ENCODE measurements at regions of chr11 and their contacts with region 1.

Region 1: DNA sequence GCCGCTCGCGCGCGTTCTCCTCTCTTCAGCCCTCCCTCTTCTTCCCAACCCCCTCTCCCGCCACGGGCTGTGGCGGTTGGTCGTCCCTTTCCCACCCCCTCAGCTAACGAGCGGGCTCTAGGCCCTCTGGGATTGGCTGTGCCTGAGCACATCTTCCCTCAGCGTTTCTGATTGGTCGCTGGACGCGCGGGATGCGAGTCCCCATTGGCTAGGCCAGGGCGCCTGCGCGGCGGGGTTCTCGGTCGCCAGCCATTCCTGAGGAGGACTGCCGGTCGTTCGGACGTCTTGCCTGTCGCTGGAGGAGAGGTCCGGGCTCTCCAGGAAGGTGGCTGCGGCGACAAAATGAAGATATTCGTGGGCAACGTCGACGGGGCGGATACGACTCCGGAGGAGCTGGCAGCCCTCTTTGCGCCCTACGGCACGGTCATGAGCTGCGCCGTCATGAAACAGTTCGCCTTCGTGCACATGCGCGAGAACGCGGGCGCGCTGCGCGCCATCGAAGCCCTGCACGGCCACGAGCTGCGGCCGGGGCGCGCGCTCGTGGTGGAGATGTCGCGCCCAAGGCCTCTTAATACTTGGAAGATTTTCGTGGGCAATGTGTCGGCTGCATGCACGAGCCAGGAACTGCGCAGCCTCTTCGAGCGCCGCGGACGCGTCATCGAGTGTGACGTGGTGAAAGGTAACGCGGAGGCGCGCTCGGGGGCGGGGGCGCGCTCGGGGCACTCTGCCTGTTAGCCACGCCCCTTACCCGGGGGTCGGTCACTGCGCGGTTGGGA is at the start of gene RBM14:
- DNase-seq: peak; percentile 96 to 100 (median 98)
- ATAC-seq: peak; percentile 82
- H3K4me3 ChIP-seq: peak within 1 kb of the TSS; percentile 88 to 93
- H3K4me3 Mint-ChIP-seq: peak within 1 kb of the TSS; percentile 98
- H3K27ac ChIP-seq: peak within 1 kb of the TSS; percentile 94 to 99
- H3K27ac Mint-ChIP-seq: peak within 1 kb of the TSS; percentile 97
- H3K4me1 ChIP-seq: peaks cover 43% of the 10 kb centered on the region
- H3K4me1 Mint-ChIP-seq: peaks cover 38% of the 10 kb centered on the region
- H3K27me3 ChIP-seq: no peaks in the 10 kb centered on the region
- H3K27me3 Mint-ChIP-seq: no peaks in the 10 kb centered on the region
- CTCF ChIP-seq: no peak
- total RNA-seq, gene RBM14: 198 to 213 TPM

Region 2: GRCh38 chr11:66222358-66223149 is 394.0 kb before region 1 on chr11:
- CTCF ChIA-PET with region 1: no interaction called
- POLR2A ChIA-PET with region 1: no interaction called
- intact Hi-C with region 1: loop called in 1 of 2 experiments (anchors 5 kb)
- DNase-seq: peak; percentile 82 to 98 (median 92)
- ATAC-seq: peak; percentile 99
- H3K4me3 ChIP-seq: no peak overlapping the region
- H3K4me3 Mint-ChIP-seq: no peak overlapping the region
- H3K27ac ChIP-seq: peak overlapping the region; percentile 23 to 82
- H3K27ac Mint-ChIP-seq: peak overlapping the region; percentile 93
- H3K4me1 ChIP-seq: peaks cover 6% of the 10 kb centered on the region
- H3K4me1 Mint-ChIP-seq: peaks cover 16% of the 10 kb centered on the region
- H3K27me3 ChIP-seq: no peaks in the 10 kb centered on the region
- H3K27me3 Mint-ChIP-seq: no peaks in the 10 kb centered on the region
- CTCF ChIP-seq: peak; percentile 98

Region 3: DNA sequence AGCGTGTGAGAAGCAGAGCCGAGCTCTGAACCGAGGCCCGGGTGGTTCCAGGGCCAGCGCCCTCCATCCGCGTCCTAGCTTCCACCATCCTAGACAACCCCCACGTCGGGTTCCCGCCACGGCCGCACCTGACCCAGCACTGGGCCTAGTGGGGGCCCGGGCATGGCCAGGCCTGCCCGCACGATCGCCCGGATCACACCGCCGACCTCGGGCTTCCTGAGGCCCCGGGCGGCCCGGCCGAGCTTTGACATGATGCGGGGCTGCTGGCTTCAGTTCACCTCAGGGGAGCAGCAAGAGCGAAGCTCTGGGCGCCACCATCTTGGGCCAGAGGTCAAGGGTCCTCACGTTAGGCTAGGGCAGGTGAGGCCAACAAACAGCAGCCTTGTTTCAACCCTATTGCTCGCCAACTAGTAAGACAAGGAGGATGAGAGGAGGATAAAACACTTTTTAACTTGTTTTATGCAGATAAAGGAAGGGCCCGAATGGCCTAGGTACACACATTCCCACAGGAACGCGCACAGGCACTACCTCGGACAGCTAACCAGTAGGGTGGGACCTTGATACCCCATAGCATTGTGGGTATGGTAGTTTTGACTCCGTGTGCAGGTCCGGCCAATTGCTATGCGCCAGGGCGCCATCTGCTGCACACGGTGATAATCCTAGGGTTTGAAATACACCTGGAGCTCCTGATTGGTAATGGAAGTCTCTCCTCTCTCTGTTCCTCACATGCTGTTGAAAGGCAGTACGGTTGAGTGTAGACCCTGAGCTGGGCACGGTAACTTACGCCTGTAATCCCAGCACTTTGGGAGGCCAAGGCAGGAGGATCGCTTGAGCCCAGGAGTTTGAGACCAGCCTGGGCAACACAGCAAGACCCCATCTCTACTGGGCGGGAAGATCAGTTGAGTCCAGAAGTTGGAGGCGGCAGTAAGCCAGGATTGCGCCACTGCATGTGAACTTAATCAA is 177.8 kb before region 1 on chr11 and contains the start of gene MRPL11:
- CTCF ChIA-PET with region 1: no interaction called
- POLR2A ChIA-PET with region 1: interaction called, 5 read pairs
- intact Hi-C with region 1: loop called in 1 of 2 experiments (anchors 2 kb)
- DNase-seq: peak; percentile 79 to 96 (median 90)
- ATAC-seq: peak; percentile 99
- H3K4me3 ChIP-seq: peak within 1 kb of the TSS; percentile 72 to 78
- H3K4me3 Mint-ChIP-seq: peak within 1 kb of the TSS; percentile 91
- H3K27ac ChIP-seq: peak within 1 kb of the TSS; percentile 66 to 85
- H3K27ac Mint-ChIP-seq: peak within 1 kb of the TSS; percentile 98
- H3K4me1 ChIP-seq: peaks cover 7% of the 10 kb centered on the region
- H3K4me1 Mint-ChIP-seq: peaks cover 10% of the 10 kb centered on the region
- H3K27me3 ChIP-seq: no peaks in the 10 kb centered on the region
- H3K27me3 Mint-ChIP-seq: peaks cover 2% of the 10 kb centered on the region
- CTCF ChIP-seq: peak; percentile 64
- total RNA-seq, gene MRPL11: 19.8 to 20.6 TPM

Region 4: DNA sequence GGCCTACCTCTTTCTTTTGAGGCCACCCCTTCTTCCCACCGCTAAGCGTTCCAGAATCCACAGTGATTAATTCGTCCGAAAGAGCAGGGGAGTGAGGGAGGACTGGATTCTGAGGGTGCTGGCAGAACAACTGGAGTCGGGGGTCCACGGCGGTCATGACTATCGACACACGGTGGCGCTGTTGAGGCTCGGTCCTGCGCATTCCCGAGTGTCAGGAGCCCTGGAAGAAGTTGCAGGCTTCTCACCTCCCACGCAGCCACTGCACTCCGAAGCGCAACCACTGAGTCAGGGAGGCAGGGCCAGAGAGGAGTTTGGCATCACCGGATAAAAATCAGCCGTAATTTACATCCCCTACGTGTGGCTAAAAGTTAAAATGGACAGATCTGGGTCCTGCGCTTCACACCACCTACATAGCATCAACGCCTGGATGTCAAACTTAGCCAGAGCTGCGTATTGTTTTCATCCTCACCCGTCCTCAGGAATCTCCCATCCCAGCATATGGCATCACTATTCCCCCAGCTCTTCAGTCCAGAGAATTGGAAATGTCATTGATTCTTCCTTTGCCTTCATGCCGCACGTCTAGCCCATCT is 37.5 kb before region 1 on chr11:
- CTCF ChIA-PET with region 1: interaction called, 3 read pairs
- POLR2A ChIA-PET with region 1: interaction called, 5 read pairs
- intact Hi-C with region 1: loop called in 1 of 2 experiments (anchors 5 kb)
- DNase-seq: peak; percentile 43 to 86 (median 80)
- ATAC-seq: peak; percentile 90
- H3K4me3 ChIP-seq: no peak overlapping the region
- H3K4me3 Mint-ChIP-seq: no peak overlapping the region
- H3K27ac ChIP-seq: no peak overlapping the region
- H3K27ac Mint-ChIP-seq: no peak overlapping the region
- H3K4me1 ChIP-seq: no peaks in the 10 kb centered on the region
- H3K4me1 Mint-ChIP-seq: peaks cover 6% of the 10 kb centered on the region
- H3K27me3 ChIP-seq: no peaks in the 10 kb centered on the region
- H3K27me3 Mint-ChIP-seq: peaks cover 2% of the 10 kb centered on the region
- CTCF ChIP-seq: peak; percentile 86

Region 5: DNA sequence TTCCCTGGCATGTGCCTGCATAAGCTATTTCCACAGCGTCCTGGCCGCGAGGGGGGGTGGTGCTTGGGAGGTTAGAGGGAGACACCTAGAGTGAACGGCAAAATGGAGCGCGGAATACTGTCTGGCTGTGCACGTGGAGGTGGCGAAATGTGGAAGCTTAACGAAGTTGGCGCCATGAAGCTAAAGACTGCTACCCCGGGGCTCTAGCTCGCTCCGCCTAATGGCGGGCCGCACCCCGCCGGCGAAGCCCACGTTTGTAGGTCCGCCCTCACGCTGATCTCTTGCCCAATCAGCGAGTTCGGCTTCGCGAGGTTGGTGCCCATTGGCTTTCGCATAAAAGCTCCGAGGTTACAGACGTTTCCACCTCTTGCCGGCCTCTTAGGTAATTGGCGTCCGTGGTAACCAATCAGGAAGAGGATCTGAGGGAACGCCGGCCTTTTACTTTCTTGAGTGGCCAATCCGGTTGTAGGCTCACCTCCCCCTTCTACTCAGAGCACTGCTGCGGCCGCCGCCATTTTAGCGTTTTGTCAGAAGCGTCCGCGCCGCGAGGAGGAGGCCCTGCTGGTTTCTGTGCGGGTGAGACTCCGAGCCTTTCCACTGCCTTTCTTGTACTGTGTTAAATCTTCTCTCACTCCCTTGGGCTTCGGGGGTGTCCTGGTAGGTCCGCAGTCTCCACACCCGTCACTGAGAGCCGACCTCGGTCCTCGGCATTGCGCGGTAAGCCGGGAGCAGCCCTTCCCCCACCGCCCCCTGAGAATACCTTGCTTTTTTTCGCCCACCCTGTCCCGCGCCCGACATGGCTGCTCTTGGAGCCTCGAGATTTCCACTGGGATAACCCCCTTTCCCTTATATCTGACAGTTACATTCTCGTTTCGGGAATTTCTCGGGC is 21.9 kb after region 1 on chr11 and contains the start of gene RBM4:
- CTCF ChIA-PET with region 1: interaction called, 27 read pairs
- POLR2A ChIA-PET with region 1: interaction called, 127 read pairs
- intact Hi-C with region 1: loop called (anchors 1 kb)
- DNase-seq: peak; percentile 92 to 100 (median 94)
- ATAC-seq: peak; percentile 89
- H3K4me3 ChIP-seq: peak within 1 kb of the TSS; percentile 87 to 88
- H3K4me3 Mint-ChIP-seq: peak within 1 kb of the TSS; percentile 98
- H3K27ac ChIP-seq: peak within 1 kb of the TSS; percentile 89 to 92
- H3K27ac Mint-ChIP-seq: peak within 1 kb of the TSS; percentile 97
- H3K4me1 ChIP-seq: peaks cover 53% of the 10 kb centered on the region
- H3K4me1 Mint-ChIP-seq: peaks cover 66% of the 10 kb centered on the region
- H3K27me3 ChIP-seq: no peaks in the 10 kb centered on the region
- H3K27me3 Mint-ChIP-seq: no peaks in the 10 kb centered on the region
- CTCF ChIP-seq: no peak
- total RNA-seq, gene RBM4: 183 to 191 TPM

Region 6: GRCh38 chr11:67118801-67119584 is 502.4 kb after region 1 on chr11 and contains the start of gene KDM2A:
- CTCF ChIA-PET with region 1: no interaction called
- POLR2A ChIA-PET with region 1: no interaction called
- intact Hi-C with region 1: loop called in 1 of 2 experiments (anchors 2 kb)
- DNase-seq: peak; percentile 98 to 100 (median 99)
- ATAC-seq: peak; percentile 81
- H3K4me3 ChIP-seq: peak within 1 kb of the TSS; percentile 62 to 80
- H3K4me3 Mint-ChIP-seq: peak within 1 kb of the TSS; percentile 97
- H3K27ac ChIP-seq: peak within 1 kb of the TSS; percentile 78 to 92
- H3K27ac Mint-ChIP-seq: peak within 1 kb of the TSS; percentile 96
- H3K4me1 ChIP-seq: peaks cover 34% of the 10 kb centered on the region
- H3K4me1 Mint-ChIP-seq: peaks cover 40% of the 10 kb centered on the region
- H3K27me3 ChIP-seq: no peaks in the 10 kb centered on the region
- H3K27me3 Mint-ChIP-seq: no peaks in the 10 kb centered on the region
- CTCF ChIP-seq: no peak
- total RNA-seq, gene KDM2A: 412 to 431 TPM

Region 7: GRCh38 chr11:68066742-68067141 is 1450.2 kb after region 1 on chr11:
- CTCF ChIA-PET with region 1: no interaction called
- POLR2A ChIA-PET with region 1: no interaction called
- intact Hi-C with region 1: no loop called
- DNase-seq: no peak
- ATAC-seq: no peak
- H3K4me3 ChIP-seq: no peak overlapping the region
- H3K4me3 Mint-ChIP-seq: no peak overlapping the region
- H3K27ac ChIP-seq: no peak overlapping the region
- H3K27ac Mint-ChIP-seq: no peak overlapping the region
- H3K4me1 ChIP-seq: no peaks in the 10 kb centered on the region
- H3K4me1 Mint-ChIP-seq: no peaks in the 10 kb centered on the region
- H3K27me3 ChIP-seq: no peaks in the 10 kb centered on the region
- H3K27me3 Mint-ChIP-seq: no peaks in the 10 kb centered on the region
- CTCF ChIP-seq: no peak